SK-N-SH (cell line): ENCODE measurements at regions of chr5 and their contacts with region 1.

Region 1: GRCh38 chr5:112419986-112420864 is 1.1 kb upstream of the EPB41L4A start:
- DNase-seq: peak; percentile 88
- H3K4me3 ChIP-seq: peak overlapping the region; percentile 61 to 65
- H3K27ac ChIP-seq: peak overlapping the region in 1 of 2 experiments; percentile 47; a peak in 1 of 4 replicates
- H3K4me1 ChIP-seq: peaks cover 0 to 5% of the 10 kb centered on the region in 2 experiments; a peak in 2 of 4 replicates
- H3K27me3 ChIP-seq: peaks cover 27% of the 10 kb centered on the region
- CTCF ChIP-seq: peak; percentile 77
- EP300 ChIP-seq: no peak
- RAD21 ChIP-seq: peak; percentile 91

Region 2: DNA sequence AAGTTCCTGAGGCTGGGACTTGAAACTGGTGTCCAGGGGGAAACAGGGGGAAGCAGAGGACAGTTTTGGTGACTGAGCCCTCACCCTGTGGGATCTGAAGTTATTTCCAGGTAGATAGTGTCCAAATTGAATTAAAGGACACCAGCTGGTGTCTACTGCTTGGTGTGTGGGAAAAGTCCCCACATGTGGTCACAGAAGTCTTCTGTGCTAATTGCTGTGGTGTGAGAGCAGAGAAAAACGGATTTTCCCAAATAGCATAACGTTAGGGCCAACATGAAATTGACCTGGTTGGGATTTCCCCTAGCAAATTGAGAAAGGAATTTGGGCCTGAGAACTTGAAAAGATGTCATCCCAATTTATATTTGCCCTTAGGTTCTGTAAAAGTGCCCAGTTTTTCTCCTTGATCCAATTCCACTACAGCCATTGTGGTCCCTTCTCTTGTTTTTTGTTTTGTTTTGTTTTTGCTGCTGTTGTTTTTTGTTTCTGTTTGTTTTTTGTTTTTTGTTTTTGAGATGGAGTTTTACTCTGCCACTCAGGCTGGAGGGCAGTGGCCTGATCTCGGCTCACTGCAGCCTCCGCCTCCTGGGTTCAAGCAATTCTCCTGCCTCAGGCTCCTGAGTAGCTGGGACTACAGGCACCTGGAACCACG is 902.2 kb before region 1 on chr5:
- CTCF ChIA-PET with region 1: no interaction called
- POLR2A ChIA-PET with region 1: no interaction called
- DNase-seq: no peak
- H3K4me3 ChIP-seq: no peak overlapping the region
- H3K27ac ChIP-seq: no peak overlapping the region
- H3K4me1 ChIP-seq: peaks cover 0 to 3% of the 10 kb centered on the region in 2 experiments; a peak in 2 of 4 replicates
- H3K27me3 ChIP-seq: no peaks in the 10 kb centered on the region
- CTCF ChIP-seq: no peak
- EP300 ChIP-seq: no peak
- RAD21 ChIP-seq: no peak

Region 3: GRCh38 chr5:112174959-112175594 is 245.1 kb before region 1 on chr5:
- CTCF ChIA-PET with region 1: interaction called, 149 read pairs
- POLR2A ChIA-PET with region 1: interaction called, 4 read pairs
- DNase-seq: peak; percentile 67
- H3K4me3 ChIP-seq: peak overlapping the region; percentile 17 to 31; a peak in 1 of 4 replicates
- H3K27ac ChIP-seq: no peak overlapping the region
- H3K4me1 ChIP-seq: peaks cover 0 to 2% of the 10 kb centered on the region in 2 experiments; a peak in 1 of 4 replicates
- H3K27me3 ChIP-seq: no peaks in the 10 kb centered on the region
- CTCF ChIP-seq: peak; percentile 81
- EP300 ChIP-seq: no peak
- RAD21 ChIP-seq: peak; percentile 80

Region 4: GRCh38 chr5:112203229-112203628 is 217.0 kb before region 1 on chr5:
- CTCF ChIA-PET with region 1: interaction called, 27 read pairs
- POLR2A ChIA-PET with region 1: no interaction called
- DNase-seq: no peak
- H3K4me3 ChIP-seq: no peak overlapping the region
- H3K27ac ChIP-seq: no peak overlapping the region
- H3K4me1 ChIP-seq: no peaks in the 10 kb centered on the region; a peak in 1 of 4 replicates
- H3K27me3 ChIP-seq: no peaks in the 10 kb centered on the region; the same call in none of the 2 replicates
- CTCF ChIP-seq: no peak
- EP300 ChIP-seq: no peak
- RAD21 ChIP-seq: no peak

Region 5: DNA sequence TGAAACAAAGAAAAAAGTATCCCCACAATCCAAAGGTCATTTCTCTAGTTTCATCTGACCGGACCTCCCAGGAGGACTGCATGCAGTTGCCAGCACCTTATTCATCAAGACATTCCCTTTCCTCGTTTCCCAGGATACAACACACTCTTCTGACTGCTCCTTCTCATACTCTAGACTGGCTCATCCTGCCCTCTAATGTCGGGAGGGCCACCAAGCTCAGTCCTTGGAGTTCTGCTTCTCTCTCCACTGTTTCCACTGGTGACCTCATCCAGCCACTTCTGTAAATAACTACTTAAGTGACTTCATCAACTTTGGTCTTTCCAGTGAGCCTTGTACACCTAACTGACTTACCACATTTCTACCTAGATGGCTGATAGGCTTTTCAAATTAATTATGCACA is 180.2 kb before region 1 on chr5:
- CTCF ChIA-PET with region 1: interaction called, 72 read pairs
- POLR2A ChIA-PET with region 1: no interaction called
- DNase-seq: no peak
- H3K4me3 ChIP-seq: no peak overlapping the region
- H3K27ac ChIP-seq: no peak overlapping the region
- H3K4me1 ChIP-seq: no peaks in the 10 kb centered on the region
- H3K27me3 ChIP-seq: no peaks in the 10 kb centered on the region
- CTCF ChIP-seq: no peak
- EP300 ChIP-seq: no peak
- RAD21 ChIP-seq: no peak

Region 6: DNA sequence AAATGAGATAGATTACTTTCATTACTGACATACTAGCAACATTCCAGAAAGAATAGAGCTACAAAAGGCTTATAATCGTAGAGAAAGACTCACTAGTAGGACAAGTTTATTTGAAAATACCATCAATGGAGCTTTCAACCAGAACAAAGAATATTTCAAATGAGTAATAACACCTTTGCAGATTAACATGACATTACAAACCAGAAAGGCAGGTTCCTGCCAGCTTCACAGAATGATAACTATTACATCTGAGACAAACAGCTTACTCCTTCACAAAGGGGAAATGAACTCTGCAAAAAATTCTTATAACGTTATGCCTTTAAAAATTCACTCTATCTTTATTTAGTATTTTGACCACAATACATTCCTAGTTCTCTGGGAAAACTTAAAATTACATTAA is 104.2 kb before region 1 on chr5:
- CTCF ChIA-PET with region 1: interaction called, 12 read pairs
- POLR2A ChIA-PET with region 1: no interaction called
- DNase-seq: no peak
- H3K4me3 ChIP-seq: no peak overlapping the region
- H3K27ac ChIP-seq: no peak overlapping the region
- H3K4me1 ChIP-seq: no peaks in the 10 kb centered on the region
- H3K27me3 ChIP-seq: no peaks in the 10 kb centered on the region
- CTCF ChIP-seq: no peak
- EP300 ChIP-seq: no peak
- RAD21 ChIP-seq: no peak

Region 7: DNA sequence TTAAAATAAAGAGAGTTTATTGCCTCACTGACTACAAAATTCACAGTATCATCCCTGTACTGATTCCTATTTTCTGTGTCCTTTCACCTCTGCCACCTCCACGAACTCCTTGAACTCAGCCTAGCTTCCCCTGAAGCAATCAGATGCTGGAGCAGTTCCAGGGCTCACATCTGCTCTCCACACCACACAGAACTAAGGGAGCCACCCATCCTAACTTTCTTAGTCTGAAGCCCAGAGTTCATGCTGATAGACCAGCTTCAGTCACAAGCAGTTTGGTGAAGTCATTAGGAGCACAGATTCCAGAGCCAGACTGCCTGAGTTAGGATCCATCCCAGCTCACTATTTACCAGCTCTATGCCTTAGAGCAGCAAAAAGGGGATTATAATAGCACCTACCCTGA is 14.4 kb after region 1 on chr5:
- CTCF ChIA-PET with region 1: interaction called, 30 read pairs
- POLR2A ChIA-PET with region 1: no interaction called
- DNase-seq: peak; percentile 5
- H3K4me3 ChIP-seq: no peak overlapping the region
- H3K27ac ChIP-seq: no peak overlapping the region
- H3K4me1 ChIP-seq: peaks cover 0 to 3% of the 10 kb centered on the region in 2 experiments; a peak in 1 of 4 replicates
- H3K27me3 ChIP-seq: no peaks in the 10 kb centered on the region
- CTCF ChIP-seq: no peak
- EP300 ChIP-seq: no peak
- RAD21 ChIP-seq: no peak

Region 8: DNA sequence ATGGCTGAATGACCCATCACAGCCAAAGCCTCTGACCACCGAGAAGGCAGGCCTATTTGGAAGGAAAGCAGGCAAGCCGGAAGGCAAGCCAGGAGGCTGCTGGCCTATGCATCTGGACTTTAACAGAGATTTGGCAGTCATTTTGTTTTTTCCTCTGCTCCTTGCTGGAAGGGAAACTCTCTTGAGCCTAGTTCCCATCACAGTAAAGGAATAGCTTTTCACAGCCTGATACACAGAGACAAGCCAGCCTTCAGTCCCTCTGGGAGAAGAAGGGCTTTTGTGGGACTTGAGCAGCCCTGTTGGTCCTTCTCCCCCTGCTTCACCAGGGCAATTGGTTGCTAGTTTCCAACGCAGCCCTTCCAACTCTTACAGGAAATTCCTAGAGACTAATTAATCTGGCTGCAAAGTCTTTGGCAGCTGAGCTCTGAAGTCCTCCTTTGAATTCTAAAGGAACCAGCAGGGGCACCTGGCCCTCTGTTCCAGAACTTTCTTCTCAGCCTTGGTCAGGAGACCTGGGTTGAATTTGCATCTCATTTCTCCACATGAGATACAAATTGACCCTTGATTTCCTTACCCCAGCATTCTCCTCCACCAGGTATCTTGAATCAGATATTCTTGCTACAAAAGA is 156.2 kb after region 1 on chr5:
- CTCF ChIA-PET with region 1: no interaction called
- POLR2A ChIA-PET with region 1: no interaction called
- DNase-seq: no peak
- H3K4me3 ChIP-seq: no peak overlapping the region
- H3K27ac ChIP-seq: no peak overlapping the region
- H3K4me1 ChIP-seq: no peaks in the 10 kb centered on the region
- H3K27me3 ChIP-seq: no peaks in the 10 kb centered on the region; the same call in none of the 2 replicates
- CTCF ChIP-seq: no peak
- EP300 ChIP-seq: no peak
- RAD21 ChIP-seq: no peak

Region 9: DNA sequence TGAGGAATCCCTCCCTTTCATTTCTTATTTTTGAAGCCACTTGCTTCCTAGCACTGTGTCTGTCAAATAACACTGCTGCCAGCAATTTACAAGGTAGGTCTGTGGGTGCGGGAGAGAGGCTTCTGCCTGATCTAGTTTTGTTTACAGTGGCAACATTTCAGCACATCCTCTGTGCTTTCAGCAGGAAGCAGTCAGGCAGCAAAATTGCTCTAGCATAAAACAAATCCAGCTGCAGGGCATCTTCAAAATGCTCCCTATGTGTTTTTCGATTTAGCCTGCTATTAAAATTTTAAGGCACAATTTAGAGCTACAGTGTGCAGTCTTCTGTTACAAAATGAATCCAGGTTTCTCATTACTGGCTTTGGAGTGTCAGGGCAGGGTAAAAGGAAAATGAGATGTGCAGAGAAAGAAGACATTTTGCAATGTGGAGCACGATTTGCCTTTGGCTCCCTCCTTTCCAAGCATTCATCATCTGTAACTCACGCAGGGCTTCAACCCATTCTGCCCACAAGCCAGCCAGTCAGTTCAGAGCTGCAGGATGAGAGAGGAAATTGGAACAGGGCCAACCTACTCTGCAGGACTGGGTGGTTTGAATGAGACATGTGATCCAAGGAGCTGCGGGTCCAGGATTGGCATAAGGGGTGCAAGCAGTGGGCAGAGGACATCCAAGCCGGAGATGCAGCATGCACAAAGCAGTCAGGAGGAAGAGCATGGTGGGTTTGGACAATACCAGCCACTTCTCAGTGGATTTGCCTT is 174.0 kb after region 1 on chr5:
- CTCF ChIA-PET with region 1: no interaction called
- POLR2A ChIA-PET with region 1: no interaction called
- DNase-seq: peak; percentile 20
- H3K4me3 ChIP-seq: no peak overlapping the region
- H3K27ac ChIP-seq: peak overlapping the region in 1 of 2 experiments; percentile 77; a peak in 2 of 4 replicates
- H3K4me1 ChIP-seq: peaks cover 0 to 20% of the 10 kb centered on the region in 2 experiments; a peak in 2 of 4 replicates
- H3K27me3 ChIP-seq: no peaks in the 10 kb centered on the region
- CTCF ChIP-seq: no peak
- EP300 ChIP-seq: no peak; a peak in 1 of 4 replicates
- RAD21 ChIP-seq: no peak